ENCODE measurements at regions of chr3 and their contacts with region 1.

Region 1: DNA sequence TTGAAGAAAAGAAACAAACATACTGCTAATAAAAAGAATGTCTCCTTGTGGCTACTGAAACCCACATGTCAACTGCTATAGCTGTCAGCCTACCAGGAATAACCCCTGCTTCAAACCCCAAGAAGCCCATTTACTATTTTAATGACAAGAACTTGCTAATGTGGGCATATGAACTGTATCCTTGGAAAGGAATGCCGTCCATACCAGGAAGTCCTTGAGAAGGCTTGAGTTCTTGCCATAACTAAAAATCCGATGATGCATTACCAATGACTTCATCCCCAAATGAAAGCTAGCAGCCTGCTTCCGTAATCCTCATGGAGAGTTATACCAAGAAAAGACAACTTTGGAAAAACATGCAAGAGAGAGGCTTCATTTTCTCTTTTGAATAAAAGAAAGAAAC is 34.8 kb downstream of the MINDY4B start:
- DNase-seq: peak; percentile 55
- H3K4me3 ChIP-seq: no peak overlapping the region
- CTCF ChIP-seq: no peak

Region 2: GRCh38 chr3:150666167-150666566 is 204.2 kb before region 1 on chr3:
- CTCF ChIA-PET with region 1: no interaction called
- POLR2A ChIA-PET with region 1: no interaction called
- DNase-seq: no peak
- H3K4me3 ChIP-seq: no peak overlapping the region
- CTCF ChIP-seq: no peak

Region 3: GRCh38 chr3:150729682-150730360 is 140.6 kb before region 1 on chr3:
- CTCF ChIA-PET with region 1: interaction called, 12 read pairs
- POLR2A ChIA-PET with region 1: no interaction called
- DNase-seq: no peak
- H3K4me3 ChIP-seq: no peak overlapping the region
- CTCF ChIP-seq: no peak